Sciatic nerve (tissue), 2 donors: ENCODE measurements at regions of chr2 and their contacts with region 1.

Region 1: GRCh38 chr2:41869542-41870264 is 178.1 kb upstream of the PKDCC start:
- DNase-seq: peak; percentile 91
- ATAC-seq: peak; percentile 89

Region 2: DNA sequence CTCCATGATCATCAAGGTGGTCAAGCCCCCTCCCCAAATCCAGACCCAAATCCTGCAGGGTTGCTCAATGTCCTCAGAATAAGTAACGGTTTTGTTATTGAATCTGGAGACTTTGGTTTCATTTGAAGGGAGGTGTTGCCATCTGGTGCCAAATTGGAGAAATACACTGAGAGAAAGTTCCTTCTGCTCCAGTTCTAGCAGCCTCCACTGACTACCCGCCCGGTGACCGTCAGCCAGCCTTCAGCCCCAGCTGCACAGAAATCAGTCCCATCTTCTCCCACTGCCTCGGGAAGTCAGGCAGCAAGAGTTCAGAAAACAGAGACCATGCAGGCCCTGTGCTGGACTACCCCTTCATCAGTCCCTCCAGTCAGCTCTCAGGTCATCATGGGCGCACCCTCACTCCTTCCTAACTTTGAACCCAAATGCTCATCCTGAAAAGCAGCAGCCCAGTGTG is 216.8 kb after region 1 on chr2:
- intact Hi-C with region 1: loop called (anchors 5 kb)
- DNase-seq: no peak
- ATAC-seq: peak; percentile 69